ENCODE measurements at regions of chr12 and their contacts with region 1.

Region 1: GRCh38 chr12:11361151-11361550 is 34.2 kb downstream of the PRB2 start:
- DNase-seq: no peak
- ATAC-seq: no peak
- H3K4me3 ChIP-seq: no peak overlapping the region
- H3K27ac ChIP-seq: no peak overlapping the region
- H3K4me1 ChIP-seq: peaks cover 0 to 5% of the 10 kb centered on the region in 2 experiments; a peak in 2 of 4 replicates
- H3K27me3 ChIP-seq: peaks cover 13% of the 10 kb centered on the region; the same call in 1 of the 2 replicates
- CTCF ChIP-seq: no peak
- POLR2A ChIP-seq: no peak
- RAD21 ChIP-seq: no peak

Region 2: DNA sequence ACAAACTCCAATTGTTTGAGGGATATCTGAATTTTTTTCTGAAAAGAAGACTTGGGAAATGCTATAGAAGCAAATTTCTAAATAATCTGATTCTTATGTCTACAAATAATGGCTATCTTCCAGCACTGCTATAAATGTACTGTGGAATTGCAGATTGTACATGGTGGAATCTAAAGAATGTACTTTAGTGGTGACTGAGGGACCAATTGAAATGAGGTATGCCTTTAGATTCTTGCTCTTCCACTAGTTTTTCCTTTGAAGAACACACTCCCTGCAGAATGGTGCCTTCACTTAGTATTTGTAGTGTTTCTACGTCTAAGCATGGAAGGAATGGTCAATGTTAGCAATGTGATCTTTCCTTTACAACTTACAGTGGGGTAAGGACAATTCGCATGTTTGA is 39.2 kb before region 1 on chr12:
- CTCF ChIA-PET with region 1: no interaction called
- POLR2A ChIA-PET with region 1: no interaction called
- RAD21 ChIA-PET with region 1: no interaction called
- intact Hi-C with region 1: loop called (anchors 5 kb)
- DNase-seq: no peak
- ATAC-seq: no peak
- H3K4me3 ChIP-seq: no peak overlapping the region
- H3K27ac ChIP-seq: no peak overlapping the region
- H3K4me1 ChIP-seq: no peaks in the 10 kb centered on the region
- H3K27me3 ChIP-seq: peaks cover 8% of the 10 kb centered on the region
- CTCF ChIP-seq: no peak
- POLR2A ChIP-seq: no peak
- RAD21 ChIP-seq: no peak